SK-N-SH (cell line): ENCODE measurements at regions of chr20 and their contacts with region 1.

Region 1: DNA sequence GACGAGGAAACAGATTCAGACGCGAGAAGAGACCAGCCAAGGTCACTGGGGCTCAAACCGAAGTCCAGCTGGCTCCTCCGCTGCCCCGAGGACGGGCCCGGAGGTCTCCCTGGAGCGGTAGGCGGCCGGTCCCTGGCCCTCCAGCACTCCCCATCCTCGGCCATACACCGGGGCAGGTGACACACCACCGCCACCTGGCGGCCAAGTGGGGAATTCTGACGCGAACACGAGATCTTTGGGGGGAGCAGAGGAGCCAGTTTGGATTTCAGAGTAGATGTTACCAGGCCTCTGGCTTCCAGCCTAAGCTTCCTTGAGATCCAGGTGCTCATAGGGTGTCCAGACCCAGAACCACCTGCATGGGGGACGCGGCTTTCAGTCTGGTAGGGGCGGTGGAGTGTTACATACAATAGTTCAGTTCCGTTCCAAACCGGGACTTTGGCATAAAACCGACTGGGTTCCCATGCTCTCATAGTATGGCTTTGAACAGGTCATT is 16.1 kb downstream of the BPIFB1 start:
- DNase-seq: peak; percentile 87
- H3K4me3 ChIP-seq: peak overlapping the region; percentile 16 to 19
- H3K27ac ChIP-seq: no peak overlapping the region
- H3K4me1 ChIP-seq: no peaks in the 10 kb centered on the region
- H3K27me3 ChIP-seq: peaks cover 22% of the 10 kb centered on the region; the same call in 1 of the 2 replicates
- CTCF ChIP-seq: peak; percentile 88
- EP300 ChIP-seq: no peak
- RAD21 ChIP-seq: peak; percentile 73

Region 2: GRCh38 chr20:33262658-33263065 is 36.5 kb before region 1 on chr20:
- CTCF ChIA-PET with region 1: interaction called, 34 read pairs
- POLR2A ChIA-PET with region 1: no interaction called
- DNase-seq: peak; percentile 52
- H3K4me3 ChIP-seq: no peak overlapping the region; a peak in 1 of 4 replicates
- H3K27ac ChIP-seq: no peak overlapping the region
- H3K4me1 ChIP-seq: no peaks in the 10 kb centered on the region
- H3K27me3 ChIP-seq: peaks cover 13% of the 10 kb centered on the region; the same call in 1 of the 2 replicates
- CTCF ChIP-seq: peak; percentile 65
- EP300 ChIP-seq: no peak
- RAD21 ChIP-seq: peak; percentile 77

Region 3: DNA sequence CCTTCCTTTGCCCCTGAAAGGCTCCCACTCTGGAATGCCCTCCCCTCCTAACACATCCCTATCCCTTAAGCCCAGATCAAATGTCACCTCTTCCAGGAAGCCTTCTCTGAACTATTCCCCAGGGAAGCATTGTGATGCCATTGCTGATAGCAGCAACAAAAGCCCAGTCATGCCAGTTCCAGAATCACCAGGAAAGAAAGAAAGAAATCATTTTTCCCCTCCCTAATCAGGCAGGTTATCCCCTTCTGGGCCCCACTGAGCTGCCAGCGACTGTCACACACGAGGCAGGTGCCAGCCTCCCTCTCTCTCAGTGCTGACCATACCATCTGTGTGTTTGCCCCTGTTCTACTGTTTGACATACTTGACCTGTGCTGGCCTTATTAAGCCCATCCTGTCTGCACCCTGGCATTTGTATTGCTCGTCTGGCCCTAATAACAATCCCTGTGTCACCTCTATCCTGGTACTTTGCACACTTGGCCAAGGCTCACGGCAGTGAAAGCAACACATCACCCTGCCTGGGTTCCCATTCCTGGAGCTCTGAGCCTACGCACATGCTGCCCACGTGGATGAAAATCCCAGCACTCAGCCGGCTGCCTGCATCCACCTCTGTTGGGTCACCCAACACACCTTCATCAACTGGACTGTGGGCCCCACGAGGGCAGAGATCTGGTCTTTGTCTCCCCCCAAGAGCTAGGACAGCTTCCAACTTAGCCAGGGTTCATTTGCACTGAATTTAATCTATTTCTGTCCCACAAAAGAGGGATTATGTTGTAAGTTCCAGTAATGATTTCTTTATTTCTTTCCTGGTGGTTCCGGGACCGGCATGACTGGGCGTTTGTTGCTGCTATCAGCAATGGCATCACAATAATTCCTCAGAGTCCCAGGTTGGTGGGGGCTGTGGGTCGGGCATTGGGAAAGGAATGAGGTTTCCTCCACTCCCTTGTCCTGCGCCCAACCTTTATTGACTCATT is 21.4 kb before region 1 on chr20:
- CTCF ChIA-PET with region 1: interaction called, 11 read pairs
- POLR2A ChIA-PET with region 1: no interaction called
- DNase-seq: no peak
- H3K4me3 ChIP-seq: no peak overlapping the region
- H3K27ac ChIP-seq: no peak overlapping the region
- H3K4me1 ChIP-seq: peaks cover 0 to 12% of the 10 kb centered on the region in 2 experiments; a peak in 1 of 4 replicates
- H3K27me3 ChIP-seq: no peaks in the 10 kb centered on the region; the same call in 1 of the 2 replicates
- CTCF ChIP-seq: no peak
- EP300 ChIP-seq: no peak
- RAD21 ChIP-seq: no peak

Region 4: GRCh38 chr20:33284238-33284637 is 14.9 kb before region 1 on chr20:
- CTCF ChIA-PET with region 1: interaction called, 35 read pairs
- POLR2A ChIA-PET with region 1: no interaction called
- DNase-seq: peak; percentile 52
- H3K4me3 ChIP-seq: no peak overlapping the region
- H3K27ac ChIP-seq: no peak overlapping the region
- H3K4me1 ChIP-seq: peaks cover 0 to 6% of the 10 kb centered on the region in 2 experiments; a peak in 1 of 4 replicates
- H3K27me3 ChIP-seq: no peaks in the 10 kb centered on the region; the same call in 1 of the 2 replicates
- CTCF ChIP-seq: no peak
- EP300 ChIP-seq: no peak
- RAD21 ChIP-seq: no peak

Region 5: GRCh38 chr20:33309631-33310030 is 10.5 kb after region 1 on chr20:
- CTCF ChIA-PET with region 1: interaction called, 19 read pairs
- POLR2A ChIA-PET with region 1: no interaction called
- DNase-seq: no peak
- H3K4me3 ChIP-seq: no peak overlapping the region
- H3K27ac ChIP-seq: no peak overlapping the region
- H3K4me1 ChIP-seq: no peaks in the 10 kb centered on the region; a peak in 1 of 4 replicates
- H3K27me3 ChIP-seq: no peaks in the 10 kb centered on the region
- CTCF ChIP-seq: no peak
- EP300 ChIP-seq: no peak
- RAD21 ChIP-seq: no peak

Region 6: DNA sequence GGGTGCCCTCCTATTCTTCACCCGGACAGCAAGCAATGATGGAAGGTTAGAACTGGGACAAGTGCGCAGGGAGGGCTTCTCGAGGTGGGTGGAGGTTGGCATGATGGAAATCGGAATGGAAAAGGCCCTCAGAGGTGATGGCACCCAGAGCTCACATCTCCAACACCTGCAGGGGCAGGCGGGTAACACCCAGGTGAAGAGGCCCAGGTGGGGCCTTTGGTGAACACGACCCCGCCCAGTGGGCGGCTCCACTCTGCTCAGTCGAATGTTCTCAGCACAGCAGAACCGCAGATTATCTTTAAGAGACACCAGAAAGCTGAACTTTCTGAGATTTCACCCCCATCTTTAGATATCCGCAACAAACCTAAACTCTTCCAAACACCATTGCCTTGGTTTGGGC is 29.0 kb after region 1 on chr20:
- CTCF ChIA-PET with region 1: interaction called, 11 read pairs
- POLR2A ChIA-PET with region 1: no interaction called
- DNase-seq: no peak
- H3K4me3 ChIP-seq: no peak overlapping the region
- H3K27ac ChIP-seq: no peak overlapping the region
- H3K4me1 ChIP-seq: no peaks in the 10 kb centered on the region
- H3K27me3 ChIP-seq: peaks cover 74% of the 10 kb centered on the region
- CTCF ChIP-seq: no peak
- EP300 ChIP-seq: no peak
- RAD21 ChIP-seq: no peak

Region 7: GRCh38 chr20:33351696-33352095 is 52.5 kb after region 1 on chr20:
- CTCF ChIA-PET with region 1: no interaction called
- POLR2A ChIA-PET with region 1: no interaction called
- DNase-seq: no peak
- H3K4me3 ChIP-seq: no peak overlapping the region
- H3K27ac ChIP-seq: no peak overlapping the region
- H3K4me1 ChIP-seq: no peaks in the 10 kb centered on the region
- H3K27me3 ChIP-seq: no peaks in the 10 kb centered on the region
- CTCF ChIP-seq: no peak
- EP300 ChIP-seq: no peak
- RAD21 ChIP-seq: no peak